Right cardiac atrium (tissue), 5 donors: ENCODE measurements at regions of chr3 and their contacts with region 1.

Region 1: DNA sequence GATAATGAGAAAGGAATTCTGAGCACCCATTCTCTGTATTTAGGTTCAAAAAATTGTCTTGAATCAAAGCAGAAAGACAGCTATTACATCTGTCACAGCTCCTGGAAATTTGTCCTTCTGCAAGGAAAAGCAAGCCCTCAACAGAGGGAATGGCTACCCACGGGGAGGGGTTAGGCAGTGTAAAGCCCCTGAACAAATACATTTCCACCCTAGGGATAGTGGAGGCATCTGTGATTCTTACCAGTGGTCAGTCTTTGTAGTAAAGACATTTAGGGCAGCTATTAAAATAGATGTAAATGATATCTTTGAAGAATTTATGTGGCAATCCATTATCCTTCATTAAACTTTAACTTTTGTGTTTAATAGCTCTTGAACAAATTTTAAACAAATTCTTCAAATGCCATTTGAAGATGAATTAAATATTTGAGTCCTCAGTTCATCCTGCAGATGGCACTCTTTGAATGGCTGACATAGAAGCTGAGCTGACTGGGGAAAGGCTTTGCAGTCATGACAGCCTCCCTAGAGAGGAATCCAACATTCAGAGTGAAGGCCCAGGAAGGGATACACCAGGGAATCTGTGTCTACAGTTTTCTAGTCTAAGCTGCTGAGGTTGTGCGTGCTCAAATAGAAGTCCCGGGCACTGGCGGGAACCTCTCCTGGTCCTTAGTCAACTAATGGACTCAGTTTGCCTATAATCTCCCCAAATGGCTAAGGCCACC is 359.7 kb upstream of the ROPN1 start:
- DNase-seq: no peak
- ATAC-seq: peak; percentile 76 to 85
- H3K4me3 ChIP-seq: no peak overlapping the region
- H3K27ac ChIP-seq: no peak overlapping the region
- H3K4me1 ChIP-seq: no peaks in the 10 kb centered on the region
- H3K27me3 ChIP-seq: no peaks in the 10 kb centered on the region

Region 2: GRCh38 chr3:124158369-124158881 is 193.2 kb before region 1 on chr3:
- intact Hi-C with region 1: no loop called
- DNase-seq: no peak
- ATAC-seq: no peak
- H3K4me3 ChIP-seq: no peak overlapping the region
- H3K27ac ChIP-seq: no peak overlapping the region
- H3K4me1 ChIP-seq: peaks cover 11% of the 10 kb centered on the region
- H3K27me3 ChIP-seq: no peaks in the 10 kb centered on the region

Region 3: GRCh38 chr3:124467980-124468902 is 116.7 kb after region 1 on chr3:
- intact Hi-C with region 1: loop called (anchors 2 to 10 kb)
- DNase-seq: peak; percentile 27 to 63 (median 60)
- ATAC-seq: peak; percentile 69 to 83
- H3K4me3 ChIP-seq: no peak overlapping the region
- H3K27ac ChIP-seq: no peak overlapping the region
- H3K4me1 ChIP-seq: no peaks in the 10 kb centered on the region
- H3K27me3 ChIP-seq: no peaks in the 10 kb centered on the region

Region 4: DNA sequence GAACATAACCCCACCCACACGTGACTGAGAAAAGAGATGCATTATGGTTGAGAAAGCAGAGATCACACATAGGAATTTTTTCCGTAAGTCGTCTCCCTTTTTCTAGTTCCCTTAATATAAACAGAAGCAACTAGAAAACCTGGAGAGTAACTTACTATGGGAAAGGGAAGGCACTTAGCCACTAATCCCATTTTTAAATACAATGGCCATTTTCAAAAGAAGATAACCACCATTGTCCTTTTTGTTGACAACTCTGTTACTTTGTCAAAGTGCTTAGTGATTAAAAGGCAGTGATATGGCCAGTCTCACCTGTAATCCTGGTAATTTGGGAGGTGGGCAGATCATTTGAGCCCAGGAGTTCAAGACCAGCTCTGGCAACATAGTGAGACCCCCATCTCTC is 194.3 kb after region 1 on chr3:
- intact Hi-C with region 1: loop called in 3 of 4 experiments (anchors 5 to 10 kb)
- DNase-seq: no peak
- ATAC-seq: no peak
- H3K4me3 ChIP-seq: no peak overlapping the region
- H3K27ac ChIP-seq: no peak overlapping the region
- H3K4me1 ChIP-seq: no peaks in the 10 kb centered on the region
- H3K27me3 ChIP-seq: no peaks in the 10 kb centered on the region

Region 5: GRCh38 chr3:124559881-124560574 is 208.4 kb after region 1 on chr3:
- intact Hi-C with region 1: loop called in 2 of 4 experiments (anchors 10 kb)
- DNase-seq: peak; percentile 63 to 76 (median 65)
- ATAC-seq: peak; percentile 76 to 79
- H3K4me3 ChIP-seq: no peak overlapping the region
- H3K27ac ChIP-seq: no peak overlapping the region
- H3K4me1 ChIP-seq: peaks cover 10% of the 10 kb centered on the region
- H3K27me3 ChIP-seq: no peaks in the 10 kb centered on the region

Region 6: GRCh38 chr3:124811436-124811835 is 459.8 kb after region 1 on chr3:
- intact Hi-C with region 1: no loop called
- DNase-seq: peak in 1 of 3 donors; percentile 58
- ATAC-seq: peak; percentile 51 to 70
- H3K4me3 ChIP-seq: no peak overlapping the region
- H3K27ac ChIP-seq: peak overlapping the region; percentile 93
- H3K4me1 ChIP-seq: peaks cover 20% of the 10 kb centered on the region
- H3K27me3 ChIP-seq: no peaks in the 10 kb centered on the region